ENCODE measurements at regions of chr19 and their contacts with region 1.

Region 1: GRCh38 chr19:18349524-18350128 is 9.2 kb downstream of the PGPEP1 start:
- DNase-seq: peak; percentile 79
- ATAC-seq: peak; percentile 73

Region 2: GRCh38 chr19:18274781-18275356 is 74.8 kb before region 1 on chr19:
- intact Hi-C with region 1: no loop called
- DNase-seq: peak; percentile 90
- ATAC-seq: peak; percentile 85

Region 3: GRCh38 chr19:18401580-18402112 is 52.0 kb after region 1 on chr19:
- intact Hi-C with region 1: no loop called
- DNase-seq: peak; percentile 79
- ATAC-seq: peak; percentile 89

Region 4: GRCh38 chr19:18414504-18415177 is 65.0 kb after region 1 on chr19:
- intact Hi-C with region 1: loop called (anchors 5 kb)
- DNase-seq: peak; percentile 71
- ATAC-seq: no peak

Measured in sciatic nerve (tissue), 2 donors.